ENCODE measurements at regions of chr19 and their contacts with region 1.

Region 1: GRCh38 chr19:10517760-10518443 is 655 bp upstream of the S1PR5 start:
- DNase-seq: no peak
- CTCF ChIP-seq: no peak

Region 2: GRCh38 chr19:10416380-10417257 is 101.3 kb before region 1 on chr19:
- CTCF ChIA-PET with region 1: no interaction called
- POLR2A ChIA-PET with region 1: no interaction called
- DNase-seq: peak; percentile 89
- CTCF ChIP-seq: peak; percentile 74

Region 3: GRCh38 chr19:10505583-10506229 is 12.2 kb before region 1 on chr19:
- CTCF ChIA-PET with region 1: interaction called, 16 read pairs
- POLR2A ChIA-PET with region 1: no interaction called
- DNase-seq: peak; percentile 72
- CTCF ChIP-seq: peak; percentile 67

Region 4: GRCh38 chr19:10543420-10544241 is 25.7 kb after region 1 on chr19 and contains the start of gene ATG4D:
- CTCF ChIA-PET with region 1: interaction called, 12 read pairs
- POLR2A ChIA-PET with region 1: no interaction called
- DNase-seq: peak; percentile 97
- CTCF ChIP-seq: no peak

Measured in GM10248 (cell line).